Endothelial cell of umbilical vein (primary cell): ENCODE measurements at regions of chr1 and their contacts with region 1.

Region 1: DNA sequence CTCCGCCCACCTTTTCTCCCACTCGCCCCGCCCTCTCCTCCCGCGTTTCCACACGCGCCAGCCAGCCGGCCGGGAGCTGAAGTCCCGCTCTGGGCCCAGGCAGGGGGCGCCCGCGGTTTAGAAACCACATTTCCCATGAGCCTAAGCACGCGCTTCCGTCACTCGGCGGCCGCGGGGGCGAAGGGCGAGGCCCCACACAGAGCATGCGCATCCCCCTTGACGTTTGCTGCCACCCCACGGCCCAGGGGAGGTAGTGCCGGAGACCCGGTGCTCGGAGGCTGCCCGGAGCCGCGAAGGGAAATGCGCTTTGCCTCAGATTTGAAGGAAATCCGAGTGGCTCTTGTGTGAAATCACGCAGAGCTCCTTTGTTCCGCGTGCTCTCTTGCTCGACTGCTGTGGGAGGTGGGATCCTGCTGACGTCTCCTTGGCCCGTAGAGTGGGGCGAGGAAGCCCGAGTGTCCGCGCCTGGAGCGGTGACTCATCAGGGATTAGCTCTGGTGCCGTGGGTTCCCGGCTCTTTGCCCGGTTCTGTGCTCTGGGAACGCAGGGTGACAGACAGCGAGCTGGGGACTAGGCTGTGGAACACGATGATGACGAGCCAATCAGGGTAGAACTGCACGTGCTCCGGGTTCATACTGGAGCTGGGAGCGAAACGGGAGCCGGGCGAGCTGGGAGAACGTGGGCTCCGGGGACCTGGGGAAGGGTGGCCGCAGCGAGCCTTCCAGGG is 407 bp upstream of the B3GALNT2 start:
- DNase-seq: peak; percentile 100
- H3K4me3 ChIP-seq: peak overlapping the region; percentile 14 to 80 (median 41)
- H3K27ac ChIP-seq: peak overlapping the region; percentile 71
- H3K4me1 ChIP-seq: peaks cover 9% of the 10 kb centered on the region
- H3K27me3 ChIP-seq: no peaks in the 10 kb centered on the region
- CTCF ChIP-seq: peak; percentile 87 to 92
- POLR2A ChIP-seq: peak; percentile 53

Region 2: DNA sequence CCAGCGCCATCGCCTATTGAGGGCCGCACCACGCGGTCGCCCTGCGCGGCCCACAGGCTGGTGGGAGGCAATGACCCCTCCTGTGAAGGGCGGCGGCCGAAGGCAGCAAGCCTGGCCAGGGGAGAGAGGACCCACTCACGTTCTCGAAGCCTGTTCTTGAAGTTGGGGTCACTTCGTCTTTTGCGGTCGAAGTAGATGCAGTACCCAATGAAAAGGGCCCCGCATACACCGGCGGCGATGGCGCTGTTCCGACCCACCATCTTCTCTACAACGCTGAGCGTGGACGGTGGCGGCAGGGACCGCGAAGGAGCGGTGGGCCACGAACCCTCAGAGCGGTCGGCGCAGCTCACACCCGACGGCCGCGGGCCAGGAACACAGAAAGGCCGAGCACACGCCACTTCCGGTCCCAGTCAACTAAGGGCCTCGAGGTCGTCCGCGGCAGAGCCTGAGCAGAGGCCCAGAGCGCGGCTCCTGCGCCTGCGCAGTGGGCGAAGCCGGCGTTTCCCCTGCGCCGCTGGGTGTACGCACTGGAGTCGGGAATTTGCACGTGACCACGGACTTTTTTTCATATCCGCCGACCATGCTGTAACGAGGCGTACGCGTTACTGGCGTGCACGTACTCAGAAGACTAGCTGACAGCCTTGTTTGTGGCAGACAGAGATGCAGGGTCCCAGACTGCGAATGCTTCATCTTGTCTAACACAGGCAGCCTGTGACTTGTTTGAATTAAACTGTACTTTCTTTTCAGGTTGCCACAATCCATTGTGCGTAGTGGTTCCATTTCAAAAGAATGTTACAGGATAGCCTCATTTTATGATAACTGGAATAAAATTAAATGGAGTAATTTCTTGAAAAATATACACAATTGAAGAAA is 376.0 kb before region 1 on chr1 and contains the start of gene TOMM20:
- CTCF ChIA-PET with region 1: no interaction called
- POLR2A ChIA-PET with region 1: no interaction called
- dilution Hi-C with region 1: no loop called
- intact Hi-C with region 1: loop called (anchors 1 kb)
- DNase-seq: peak; percentile 99
- H3K4me3 ChIP-seq: peak within 1 kb of the TSS; percentile 79 to 99 (median 93)
- H3K27ac ChIP-seq: peak within 1 kb of the TSS; percentile 70
- H3K4me1 ChIP-seq: peaks cover 12% of the 10 kb centered on the region
- H3K27me3 ChIP-seq: no peaks in the 10 kb centered on the region
- CTCF ChIP-seq: no peak
- POLR2A ChIP-seq: peak; percentile 96
- total RNA-seq, gene TOMM20: 98.4 and 108 TPM in 2 replicates

Region 3: GRCh38 chr1:235295902-235296376 is 208.7 kb before region 1 on chr1:
- CTCF ChIA-PET with region 1: no interaction called
- POLR2A ChIA-PET with region 1: no interaction called
- dilution Hi-C with region 1: no loop called
- intact Hi-C with region 1: no loop called
- DNase-seq: no peak
- H3K4me3 ChIP-seq: no peak overlapping the region
- H3K27ac ChIP-seq: no peak overlapping the region
- H3K4me1 ChIP-seq: peaks cover 7% of the 10 kb centered on the region
- H3K27me3 ChIP-seq: no peaks in the 10 kb centered on the region
- CTCF ChIP-seq: no peak
- POLR2A ChIP-seq: no peak

Region 4: DNA sequence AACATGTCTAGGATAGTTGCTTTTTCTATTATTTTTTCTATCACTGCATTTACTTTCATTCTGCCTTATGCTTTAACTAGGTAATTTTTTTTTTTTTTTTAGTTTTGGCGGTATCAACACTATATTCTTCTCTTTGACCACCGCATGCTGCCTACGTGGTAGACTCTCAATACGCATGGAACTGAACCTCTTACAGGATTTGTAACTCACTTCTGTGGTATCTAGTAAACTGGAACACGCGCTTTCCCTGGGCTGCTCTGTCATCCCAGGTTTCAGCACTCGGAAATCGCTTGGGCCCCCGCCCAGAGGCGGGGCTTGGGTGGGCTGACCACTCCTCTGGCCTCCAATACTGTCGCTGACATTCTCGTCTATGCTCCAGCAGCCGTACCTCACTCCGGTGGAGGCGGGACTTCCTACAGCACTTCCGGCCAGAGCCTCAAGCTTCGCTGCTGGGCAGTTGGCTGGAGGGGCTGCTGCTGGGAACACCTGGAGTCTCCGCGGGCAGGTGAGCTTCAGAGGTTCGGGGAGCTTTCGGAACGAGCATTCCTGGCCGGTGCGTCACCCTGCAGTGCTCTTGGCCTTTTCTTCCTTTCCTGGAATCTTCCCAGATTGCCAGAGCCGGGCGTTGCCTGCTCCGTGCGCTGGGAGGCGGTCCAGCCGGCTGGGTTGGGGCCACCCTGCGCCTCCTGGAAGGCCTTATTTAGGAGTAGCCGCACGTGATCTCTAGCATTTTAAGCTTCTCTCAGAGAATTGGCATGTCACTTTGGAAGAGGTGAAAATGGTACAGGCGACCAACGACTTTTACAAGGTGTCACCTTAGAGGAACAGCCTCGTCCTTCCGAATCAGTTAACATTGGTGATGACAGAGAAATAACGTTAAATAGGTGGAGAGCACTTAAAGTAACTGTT is 137.4 kb before region 1 on chr1 and contains the start of gene TBCE:
- CTCF ChIA-PET with region 1: no interaction called
- POLR2A ChIA-PET with region 1: no interaction called
- dilution Hi-C with region 1: no loop called
- intact Hi-C with region 1: loop called (anchors 1 kb)
- DNase-seq: peak; percentile 97
- H3K4me3 ChIP-seq: peak within 1 kb of the TSS; percentile 22 to 84 (median 81)
- H3K27ac ChIP-seq: peak within 1 kb of the TSS; percentile 4
- H3K4me1 ChIP-seq: peaks cover 2% of the 10 kb centered on the region
- H3K27me3 ChIP-seq: no peaks in the 10 kb centered on the region
- CTCF ChIP-seq: peak in 1 of 2 donors; percentile 14
- POLR2A ChIP-seq: peak; percentile 95
- total RNA-seq, gene TBCE: 28.6 and 32.6 TPM in 2 replicates

Region 5: GRCh38 chr1:235486321-235486720 is 18.3 kb before region 1 on chr1:
- CTCF ChIA-PET with region 1: interaction called, 15 read pairs
- POLR2A ChIA-PET with region 1: no interaction called
- dilution Hi-C with region 1: no loop called
- intact Hi-C with region 1: no loop called
- DNase-seq: peak; percentile 61
- H3K4me3 ChIP-seq: no peak overlapping the region
- H3K27ac ChIP-seq: peak overlapping the region; percentile 34
- H3K4me1 ChIP-seq: peaks cover 10% of the 10 kb centered on the region
- H3K27me3 ChIP-seq: no peaks in the 10 kb centered on the region
- CTCF ChIP-seq: no peak
- POLR2A ChIP-seq: no peak

Region 6: DNA sequence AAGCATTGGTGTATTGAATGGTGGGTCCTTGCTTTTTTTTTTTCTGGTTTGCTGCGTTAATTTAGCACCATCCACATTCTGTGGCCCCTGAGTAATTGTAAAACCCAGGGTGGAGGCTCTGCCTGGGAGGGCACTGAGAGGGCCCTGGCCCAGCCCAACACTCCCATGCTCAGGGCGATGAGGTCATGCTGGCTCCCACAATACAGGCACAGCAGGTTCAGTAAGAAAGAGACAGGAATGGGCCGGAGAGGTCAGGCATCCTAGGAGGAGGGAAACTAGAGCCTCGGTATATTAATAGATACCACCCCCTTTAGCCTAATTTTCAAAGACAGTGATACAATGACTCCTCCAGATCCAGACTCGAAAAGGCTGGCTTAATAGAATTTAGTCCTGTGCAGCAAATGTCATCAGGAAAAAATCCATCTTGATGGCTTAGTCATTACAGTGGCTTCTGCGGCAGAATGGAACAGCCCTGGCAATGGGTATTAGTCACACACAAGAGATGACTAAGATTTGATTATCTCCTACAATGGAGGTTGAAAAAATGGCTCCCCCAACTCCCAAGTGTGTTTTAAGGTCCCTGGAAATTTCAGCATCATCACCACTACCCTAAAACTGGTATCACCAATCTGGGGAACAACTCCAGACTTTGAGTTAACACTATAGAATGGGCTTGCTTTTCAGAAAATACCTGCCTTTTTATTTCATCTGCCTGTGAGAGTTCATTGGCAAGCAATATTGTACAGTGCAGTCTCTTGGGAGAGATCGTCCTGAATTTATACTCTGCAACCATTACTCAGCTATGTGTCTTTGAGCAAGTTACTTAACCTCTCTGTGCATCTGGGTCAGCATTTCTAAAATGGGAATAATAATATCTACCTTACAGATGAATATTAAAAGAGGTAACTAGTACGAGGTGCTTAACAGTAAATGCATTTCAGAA is 406.0 kb after region 1 on chr1:
- CTCF ChIA-PET with region 1: no interaction called
- POLR2A ChIA-PET with region 1: no interaction called
- dilution Hi-C with region 1: no loop called
- intact Hi-C with region 1: loop called (anchors 5 kb)
- DNase-seq: peak; percentile 82
- H3K4me3 ChIP-seq: no peak overlapping the region
- H3K27ac ChIP-seq: peak overlapping the region; percentile 65
- H3K4me1 ChIP-seq: peaks cover 34% of the 10 kb centered on the region
- H3K27me3 ChIP-seq: no peaks in the 10 kb centered on the region
- CTCF ChIP-seq: no peak
- POLR2A ChIP-seq: no peak

Region 7: GRCh38 chr1:236603991-236604904 is 1099.6 kb after region 1 on chr1 and contains the start of gene HEATR1:
- CTCF ChIA-PET with region 1: no interaction called
- POLR2A ChIA-PET with region 1: no interaction called
- dilution Hi-C with region 1: no loop called
- intact Hi-C with region 1: loop called (anchors 1 kb)
- DNase-seq: peak; percentile 97
- H3K4me3 ChIP-seq: peak within 1 kb of the TSS; percentile 64 to 86 (median 73)
- H3K27ac ChIP-seq: peak within 1 kb of the TSS; percentile 55
- H3K4me1 ChIP-seq: peaks cover 14% of the 10 kb centered on the region
- H3K27me3 ChIP-seq: no peaks in the 10 kb centered on the region
- CTCF ChIP-seq: no peak
- POLR2A ChIP-seq: peak; percentile 88
- total RNA-seq, gene HEATR1: 53.8 and 62.0 TPM in 2 replicates